MCF 10A (cell line): ENCODE measurements at regions of chr3 and their contacts with region 1.

Region 1: DNA sequence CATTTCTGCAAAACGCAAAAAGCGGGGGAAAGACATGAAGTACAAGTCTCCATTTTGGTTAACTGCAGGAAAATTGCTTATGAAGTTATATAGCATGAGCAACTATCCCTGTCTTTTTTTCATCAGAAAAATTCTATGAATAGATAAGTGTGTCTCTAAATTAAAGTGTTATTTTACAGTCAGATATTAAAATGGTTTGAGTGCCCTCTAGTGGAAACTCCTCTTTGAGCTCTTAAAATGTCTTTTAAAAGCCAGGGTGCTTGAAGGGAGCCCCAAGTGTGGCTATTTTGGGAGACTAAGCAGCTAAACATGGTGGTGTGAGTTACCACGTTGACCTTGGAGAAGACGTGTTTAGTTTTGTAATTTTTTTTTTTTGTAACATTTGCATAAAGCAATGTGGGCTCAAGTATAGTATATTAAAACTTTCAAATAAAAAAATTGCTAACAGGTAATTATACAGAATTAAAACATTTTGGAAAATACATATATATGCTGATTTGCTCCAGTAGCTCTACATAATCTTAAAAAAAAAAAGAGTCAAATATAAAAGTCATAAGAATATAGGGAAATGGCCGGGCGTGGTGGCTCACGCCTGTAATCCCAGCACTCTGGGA is 77.2 kb downstream of the PPP2R3A start:
- DNase-seq: peak; percentile 65
- H3K4me3 Mint-ChIP-seq: no peak overlapping the region
- H3K27ac Mint-ChIP-seq: no peak overlapping the region
- H3K4me1 Mint-ChIP-seq: no peaks in the 10 kb centered on the region
- H3K27me3 Mint-ChIP-seq: no peaks in the 10 kb centered on the region
- CTCF ChIP-seq: peak; percentile 61

Region 2: DNA sequence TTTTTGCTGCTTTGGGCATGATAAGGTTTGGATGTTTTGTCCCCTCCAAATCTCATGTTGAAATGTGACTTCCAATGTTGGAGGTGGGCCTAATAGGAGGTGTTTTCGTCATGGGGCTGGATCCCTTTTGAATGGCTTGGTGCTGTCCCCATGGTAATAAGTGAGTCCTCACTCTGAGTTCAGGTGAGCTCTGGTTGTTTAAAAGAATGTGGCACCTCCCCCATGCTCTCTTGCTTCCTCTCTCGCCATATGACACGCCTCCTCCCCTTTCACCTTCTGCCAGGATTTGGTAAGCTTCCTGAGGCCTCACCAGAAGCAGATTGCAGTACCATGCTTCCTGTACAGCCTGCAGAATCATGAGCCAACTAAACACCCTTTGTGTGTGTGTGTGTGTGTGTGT is 992.2 kb before region 1 on chr3:
- CTCF ChIA-PET with region 1: no interaction called
- POLR2A ChIA-PET with region 1: no interaction called
- intact Hi-C with region 1: no loop called
- DNase-seq: no peak
- H3K4me3 Mint-ChIP-seq: no peak overlapping the region
- H3K27ac Mint-ChIP-seq: no peak overlapping the region
- H3K4me1 Mint-ChIP-seq: no peaks in the 10 kb centered on the region
- H3K27me3 Mint-ChIP-seq: no peaks in the 10 kb centered on the region
- CTCF ChIP-seq: no peak

Region 3: GRCh38 chr3:135736740-135737139 is 306.0 kb before region 1 on chr3:
- CTCF ChIA-PET with region 1: interaction called, 10 read pairs
- POLR2A ChIA-PET with region 1: no interaction called
- intact Hi-C with region 1: no loop called
- DNase-seq: peak; percentile 66
- H3K4me3 Mint-ChIP-seq: no peak overlapping the region
- H3K27ac Mint-ChIP-seq: no peak overlapping the region
- H3K4me1 Mint-ChIP-seq: no peaks in the 10 kb centered on the region
- H3K27me3 Mint-ChIP-seq: peaks cover 16% of the 10 kb centered on the region
- CTCF ChIP-seq: peak; percentile 21

Region 4: DNA sequence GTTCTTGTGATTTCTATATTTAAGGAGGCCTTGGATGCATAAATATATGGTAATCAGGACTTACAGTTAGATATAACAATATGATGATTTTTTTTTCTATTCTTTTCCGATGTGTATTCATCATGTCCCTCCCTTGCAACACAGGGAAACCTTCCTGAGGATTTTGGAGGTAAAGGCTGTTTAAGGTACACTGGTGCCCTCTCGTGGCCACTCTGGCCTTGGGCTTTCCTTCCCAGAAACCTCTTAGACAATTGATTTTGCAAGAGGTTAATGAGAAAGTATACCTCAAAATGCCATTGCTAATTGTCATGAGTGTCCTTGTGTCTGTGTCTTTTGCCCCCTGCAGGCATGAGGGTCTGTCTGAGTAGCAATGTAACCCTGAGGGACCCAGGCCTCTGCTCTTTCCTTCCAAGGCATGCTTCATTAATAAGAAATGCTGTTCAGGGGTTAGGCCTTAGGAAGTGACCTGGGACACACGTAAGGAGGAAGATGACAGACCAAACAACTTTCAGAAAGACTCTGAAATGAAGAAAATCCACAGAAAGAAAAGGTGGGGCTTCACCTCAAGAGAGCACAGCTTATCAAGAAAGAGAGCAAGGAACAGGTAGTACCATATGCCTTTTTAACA is 147.5 kb before region 1 on chr3:
- CTCF ChIA-PET with region 1: interaction called, 27 read pairs
- POLR2A ChIA-PET with region 1: no interaction called
- intact Hi-C with region 1: no loop called
- DNase-seq: peak; percentile 83
- H3K4me3 Mint-ChIP-seq: no peak overlapping the region
- H3K27ac Mint-ChIP-seq: no peak overlapping the region
- H3K4me1 Mint-ChIP-seq: peaks cover 9% of the 10 kb centered on the region
- H3K27me3 Mint-ChIP-seq: peaks cover 24% of the 10 kb centered on the region
- CTCF ChIP-seq: peak; percentile 83

Region 5: GRCh38 chr3:135918580-135918962 is 124.1 kb before region 1 on chr3:
- CTCF ChIA-PET with region 1: interaction called, 447 read pairs
- POLR2A ChIA-PET with region 1: interaction called, 13 read pairs
- intact Hi-C with region 1: loop called (anchors 1 kb)
- DNase-seq: peak; percentile 52
- H3K4me3 Mint-ChIP-seq: no peak overlapping the region
- H3K27ac Mint-ChIP-seq: no peak overlapping the region
- H3K4me1 Mint-ChIP-seq: peaks cover 18% of the 10 kb centered on the region
- H3K27me3 Mint-ChIP-seq: no peaks in the 10 kb centered on the region
- CTCF ChIP-seq: peak; percentile 33

Region 6: GRCh38 chr3:135965506-135966270 is 77.0 kb before region 1 on chr3 and contains the start of gene PPP2R3A:
- CTCF ChIA-PET with region 1: interaction called, 6 read pairs
- POLR2A ChIA-PET with region 1: no interaction called
- intact Hi-C with region 1: loop called (anchors 1 kb)
- DNase-seq: peak; percentile 87
- H3K4me3 Mint-ChIP-seq: peak within 1 kb of the TSS; percentile 77
- H3K27ac Mint-ChIP-seq: peak within 1 kb of the TSS; percentile 87
- H3K4me1 Mint-ChIP-seq: peaks cover 29% of the 10 kb centered on the region
- H3K27me3 Mint-ChIP-seq: no peaks in the 10 kb centered on the region
- CTCF ChIP-seq: no peak
- total RNA-seq, gene PPP2R3A: 7.1 and 7.5 TPM in 2 replicates

Region 7: GRCh38 chr3:136055491-136055890 is 12.8 kb after region 1 on chr3:
- CTCF ChIA-PET with region 1: interaction called, 26 read pairs
- POLR2A ChIA-PET with region 1: no interaction called
- intact Hi-C with region 1: no loop called
- DNase-seq: no peak
- H3K4me3 Mint-ChIP-seq: no peak overlapping the region
- H3K27ac Mint-ChIP-seq: no peak overlapping the region
- H3K4me1 Mint-ChIP-seq: no peaks in the 10 kb centered on the region
- H3K27me3 Mint-ChIP-seq: no peaks in the 10 kb centered on the region
- CTCF ChIP-seq: no peak

Region 8: DNA sequence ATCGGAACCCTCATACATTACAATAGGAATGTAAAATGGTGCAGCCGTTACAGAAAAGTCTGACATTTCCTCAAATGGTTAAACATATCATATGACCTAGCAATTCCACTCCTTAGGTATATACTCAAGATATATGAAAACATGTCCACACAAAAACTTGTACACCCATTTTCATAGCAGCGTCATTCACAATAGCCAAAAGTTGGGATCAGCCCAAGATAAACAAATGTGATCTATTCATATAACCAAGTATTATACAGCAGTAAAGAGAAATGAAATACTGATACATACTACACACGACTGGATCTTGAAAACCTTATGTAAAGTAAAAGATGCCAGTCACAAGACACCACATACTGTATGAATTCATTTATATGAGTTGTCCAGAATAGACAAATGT is 51.1 kb after region 1 on chr3:
- CTCF ChIA-PET with region 1: no interaction called
- POLR2A ChIA-PET with region 1: no interaction called
- intact Hi-C with region 1: no loop called
- DNase-seq: peak; percentile 49
- H3K4me3 Mint-ChIP-seq: no peak overlapping the region
- H3K27ac Mint-ChIP-seq: no peak overlapping the region
- H3K4me1 Mint-ChIP-seq: peaks cover 7% of the 10 kb centered on the region
- H3K27me3 Mint-ChIP-seq: no peaks in the 10 kb centered on the region
- CTCF ChIP-seq: no peak

Region 9: DNA sequence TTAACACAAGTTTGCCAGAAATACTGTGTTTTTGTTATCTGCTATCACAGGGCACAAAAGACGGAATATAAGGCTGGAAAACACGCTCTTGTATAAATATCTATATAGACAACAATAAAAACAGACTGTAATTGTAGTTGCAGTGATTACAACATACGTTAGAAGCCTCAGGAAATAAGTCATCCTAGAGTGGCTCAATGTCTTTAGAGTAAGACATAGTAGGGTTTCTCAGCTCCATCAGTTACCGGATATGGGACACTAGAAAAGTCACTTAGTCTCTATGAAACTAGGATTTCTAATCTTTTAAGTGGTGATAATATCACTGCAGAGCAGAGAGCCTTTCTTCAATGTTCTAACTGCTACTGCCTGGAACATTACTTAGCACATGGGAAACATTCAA is 500.7 kb after region 1 on chr3:
- CTCF ChIA-PET with region 1: no interaction called
- POLR2A ChIA-PET with region 1: no interaction called
- intact Hi-C with region 1: no loop called
- DNase-seq: peak; percentile 67
- H3K4me3 Mint-ChIP-seq: no peak overlapping the region
- H3K27ac Mint-ChIP-seq: no peak overlapping the region
- H3K4me1 Mint-ChIP-seq: peaks cover 22% of the 10 kb centered on the region
- H3K27me3 Mint-ChIP-seq: no peaks in the 10 kb centered on the region
- CTCF ChIP-seq: no peak